HepG2 (cell line): ENCODE measurements at regions of chr12 and their contacts with region 1.

Region 1: DNA sequence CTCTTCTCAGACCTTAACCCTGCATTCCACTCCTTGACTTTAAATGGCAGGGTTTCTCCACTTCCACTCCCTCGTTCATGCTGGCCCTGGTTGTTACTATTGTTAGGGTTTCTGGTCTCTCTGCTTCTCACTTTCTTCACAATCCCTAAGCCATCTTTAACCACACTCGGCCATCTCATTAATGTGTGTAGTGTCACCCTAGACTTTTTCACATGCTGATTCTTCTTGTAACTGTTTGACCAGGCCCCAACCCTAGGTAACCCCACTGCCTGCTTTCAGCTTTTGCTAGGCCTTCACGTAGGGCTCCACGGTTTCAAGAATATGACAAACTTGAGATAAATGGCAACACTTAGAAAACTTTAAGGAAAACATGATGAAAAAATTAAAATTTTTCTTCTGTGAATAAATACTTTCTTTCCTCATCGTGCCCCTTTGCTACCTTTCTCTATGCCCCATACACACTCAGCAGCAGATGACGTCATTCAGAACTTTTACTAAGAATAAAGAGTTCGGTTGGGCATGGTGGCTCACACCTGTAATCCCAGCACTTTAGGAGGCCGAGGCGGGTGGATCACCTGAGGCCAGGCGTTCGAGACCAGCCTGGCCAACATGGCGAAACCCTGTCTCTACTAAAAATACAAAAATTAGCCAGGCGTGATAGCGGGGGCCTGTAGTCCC is 195.0 kb downstream of the IPO8 start:
- DNase-seq: no peak
- ATAC-seq: no peak
- H3K4me3 ChIP-seq: no peak overlapping the region
- H3K27ac ChIP-seq: no peak overlapping the region
- H3K4me1 ChIP-seq: peaks cover 18% of the 10 kb centered on the region
- H3K27me3 ChIP-seq: no peaks in the 10 kb centered on the region
- CTCF ChIP-seq: no peak
- EP300 ChIP-seq: no peak
- POLR2A ChIP-seq: no peak
- RAD21 ChIP-seq: no peak

Region 2: DNA sequence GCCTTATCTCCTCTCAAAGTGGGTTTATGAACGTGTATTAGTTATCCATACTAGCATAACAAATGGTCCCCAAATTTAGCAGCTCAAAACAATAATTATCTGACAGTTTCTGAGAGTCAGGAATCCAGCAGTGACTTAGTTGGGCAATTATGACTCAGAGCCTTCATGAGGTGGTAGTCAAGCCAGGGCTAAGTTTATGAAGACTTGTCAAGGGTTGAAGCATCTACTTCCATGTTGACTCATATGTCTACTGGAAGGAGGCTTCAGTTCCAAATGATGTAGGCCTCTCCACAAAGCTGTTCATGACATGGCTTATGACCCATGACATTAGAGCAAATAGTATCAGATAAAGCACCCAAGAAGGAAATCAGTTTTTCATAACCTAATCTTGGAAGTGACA is 121.8 kb after region 1 on chr12:
- CTCF ChIA-PET with region 1: no interaction called
- POLR2A ChIA-PET with region 1: no interaction called
- in situ Hi-C with region 1: no loop called
- intact Hi-C with region 1: loop called (anchors 10 kb)
- DNase-seq: no peak
- ATAC-seq: no peak
- H3K4me3 ChIP-seq: no peak overlapping the region
- H3K27ac ChIP-seq: no peak overlapping the region
- H3K4me1 ChIP-seq: peaks cover 40% of the 10 kb centered on the region
- H3K27me3 ChIP-seq: no peaks in the 10 kb centered on the region
- CTCF ChIP-seq: no peak
- EP300 ChIP-seq: no peak
- POLR2A ChIP-seq: no peak
- RAD21 ChIP-seq: no peak

Region 3: GRCh38 chr12:30643366-30643765 is 142.7 kb after region 1 on chr12:
- CTCF ChIA-PET with region 1: no interaction called
- POLR2A ChIA-PET with region 1: no interaction called
- in situ Hi-C with region 1: no loop called
- intact Hi-C with region 1: no loop called
- DNase-seq: no peak
- ATAC-seq: no peak
- H3K4me3 ChIP-seq: no peak overlapping the region
- H3K27ac ChIP-seq: no peak overlapping the region
- H3K4me1 ChIP-seq: 0 out of 2 replicates have a peak, but pooled peaks cover 7% of the 10 kb centered on the region
- H3K27me3 ChIP-seq: no peaks in the 10 kb centered on the region
- CTCF ChIP-seq: no peak
- EP300 ChIP-seq: no peak
- POLR2A ChIP-seq: no peak
- RAD21 ChIP-seq: no peak